Caco-2 (cell line): ENCODE measurements at regions of chr2 and their contacts with region 1.

Region 1: DNA sequence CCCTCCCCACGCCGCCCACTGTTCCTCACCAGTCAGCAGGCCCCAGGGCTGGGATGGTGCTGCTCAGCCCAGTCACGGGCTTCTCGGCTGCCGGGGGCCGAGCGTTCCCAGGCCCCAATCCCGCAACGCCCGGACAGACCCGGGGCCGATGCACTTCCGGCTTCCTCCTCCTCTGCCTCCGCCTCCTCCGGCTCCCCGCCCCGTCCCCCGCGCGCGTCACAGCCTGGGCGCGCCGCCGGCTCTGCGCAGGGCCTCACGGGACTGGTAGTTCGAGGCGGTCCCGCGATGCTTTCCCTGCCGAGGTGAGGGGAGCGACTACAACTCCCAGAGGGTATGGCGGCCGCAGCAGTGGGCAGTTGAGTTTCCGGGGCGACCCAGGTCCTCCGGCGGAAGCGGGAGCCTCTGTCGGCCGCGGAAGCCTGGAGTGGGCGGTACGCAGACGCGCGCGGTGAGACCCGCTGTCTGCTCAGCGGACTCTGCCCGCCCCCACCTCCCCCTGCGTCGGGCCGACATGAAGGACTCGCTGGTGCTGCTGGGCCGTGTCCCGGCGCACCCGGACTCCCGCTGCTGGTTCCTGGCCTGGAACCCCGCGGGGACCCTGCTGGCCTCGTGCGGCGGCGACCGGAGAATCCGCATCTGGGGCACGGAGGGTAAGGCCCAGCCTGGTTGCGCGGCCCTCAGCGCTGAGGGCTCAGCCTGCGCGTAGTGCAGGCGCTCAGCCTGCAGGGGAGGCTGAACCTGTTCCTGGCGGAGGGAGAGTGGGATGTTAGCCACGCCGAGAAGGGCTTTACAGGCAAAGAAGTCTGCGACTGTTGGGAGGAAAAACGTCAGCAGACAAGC is at the starts of genes CIAO1 and TMEM127:
- DNase-seq: peak; percentile 99
- H3K4me3 ChIP-seq: peak within 1 kb of the TSS; percentile 96
- H3K4me3 Mint-ChIP-seq: peak within 1 kb of the TSS; percentile 88
- H3K27ac Mint-ChIP-seq: peak within 1 kb of the TSS; percentile 67
- H3K4me1 ChIP-seq: peaks cover 29% of the 10 kb centered on the region
- H3K4me1 Mint-ChIP-seq: peaks cover 21% of the 10 kb centered on the region
- H3K27me3 ChIP-seq: no peaks in the 10 kb centered on the region
- H3K27me3 Mint-ChIP-seq: no peaks in the 10 kb centered on the region
- CTCF ChIP-seq: peak in 1 of 2 experiments; percentile 36
- total RNA-seq, gene CIAO1: 93.8 and 97.9 TPM in 2 replicates
- total RNA-seq, gene TMEM127: 43.3 and 49.1 TPM in 2 replicates

Region 2: DNA sequence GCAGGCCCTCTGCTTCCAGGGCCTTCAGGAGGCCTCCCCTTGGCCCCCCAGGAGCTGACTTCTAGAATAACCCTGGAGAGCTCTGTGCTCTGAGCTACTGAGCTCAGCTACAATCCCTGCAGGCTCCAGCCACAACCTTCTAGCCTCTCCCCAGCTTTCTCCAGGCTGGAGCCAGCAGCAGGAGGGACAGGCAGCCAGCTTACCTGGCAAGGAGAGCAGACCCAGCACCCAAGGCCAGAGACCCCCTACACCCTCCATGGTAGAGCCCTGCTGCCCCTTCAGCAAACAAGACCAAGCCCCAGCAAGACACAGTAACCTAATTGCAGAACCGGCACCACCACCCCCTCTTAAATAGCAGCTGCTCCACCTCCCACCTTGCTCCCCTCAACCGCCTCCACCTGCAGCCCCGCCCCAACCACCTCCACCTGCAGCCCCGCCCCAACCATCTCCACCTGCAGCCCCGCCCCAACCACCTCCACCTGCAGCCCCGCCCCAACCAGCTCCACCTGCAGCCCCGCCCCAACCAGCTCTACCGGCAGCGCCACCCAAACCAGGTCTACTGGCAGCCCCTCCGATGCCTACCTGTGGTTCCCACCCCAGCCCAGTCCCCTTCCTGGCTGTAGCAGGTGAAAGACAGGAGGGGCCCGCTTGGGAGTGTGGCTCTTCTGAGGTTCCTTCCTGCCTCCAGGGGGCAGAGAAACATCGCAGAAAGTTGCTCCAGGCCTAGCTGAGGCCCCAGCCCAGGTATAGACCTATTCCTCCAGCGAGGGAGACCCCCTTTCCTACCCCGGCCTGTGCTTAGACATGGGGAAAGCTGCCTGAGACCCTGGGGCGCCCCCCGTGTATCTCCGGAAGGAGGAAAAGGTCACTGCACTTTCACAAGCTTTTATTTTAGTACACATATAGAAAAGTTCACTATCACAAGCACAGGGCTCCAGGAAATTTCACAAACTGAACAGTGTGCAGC is 127.6 kb before region 1 on chr2 and contains the start of gene ASTL:
- CTCF ChIA-PET with region 1: interaction called, 15 read pairs
- POLR2A ChIA-PET with region 1: no interaction called
- intact Hi-C with region 1: loop called (anchors 1 kb)
- DNase-seq: peak; percentile 86 to 90
- H3K4me3 ChIP-seq: peak within 1 kb of the TSS; percentile 26
- H3K4me3 Mint-ChIP-seq: peak within 1 kb of the TSS; percentile 52
- H3K27ac Mint-ChIP-seq: no peak within 1 kb of the TSS
- H3K4me1 ChIP-seq: peaks cover 4% of the 10 kb centered on the region; the same call in 1 of the 2 replicates
- H3K4me1 Mint-ChIP-seq: peaks cover 6% of the 10 kb centered on the region
- H3K27me3 ChIP-seq: no peaks in the 10 kb centered on the region
- H3K27me3 Mint-ChIP-seq: peaks cover 8% of the 10 kb centered on the region
- CTCF ChIP-seq: peak; percentile 42 to 76
- total RNA-seq, gene ASTL: 0.23 TPM in 1 of 2 replicates, not detected in the other

Region 3: DNA sequence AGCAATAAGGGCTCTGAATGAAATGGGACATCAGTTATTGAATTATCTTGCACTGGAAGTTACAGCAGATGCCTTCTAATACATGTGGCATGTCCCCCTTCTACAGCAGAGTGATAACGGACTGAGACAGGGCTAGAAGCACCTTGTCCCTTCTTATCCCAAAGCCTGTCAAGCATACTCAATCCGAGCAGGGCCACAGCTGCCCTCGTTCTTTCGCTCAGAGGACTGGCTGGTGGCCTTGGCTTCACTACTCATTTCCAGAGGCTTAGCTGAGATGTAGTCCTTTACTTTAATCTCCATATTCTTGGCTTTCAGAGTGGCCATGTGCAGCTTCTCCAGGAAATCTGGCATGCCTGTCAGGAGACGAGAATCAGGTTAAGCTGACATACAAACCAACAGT is 79.5 kb before region 1 on chr2:
- CTCF ChIA-PET with region 1: no interaction called
- POLR2A ChIA-PET with region 1: no interaction called
- intact Hi-C with region 1: loop called (anchors 5 kb)
- DNase-seq: no peak
- H3K4me3 ChIP-seq: no peak overlapping the region
- H3K4me3 Mint-ChIP-seq: no peak overlapping the region
- H3K27ac Mint-ChIP-seq: peak overlapping the region; percentile 39
- H3K4me1 ChIP-seq: peaks cover 25% of the 10 kb centered on the region
- H3K4me1 Mint-ChIP-seq: peaks cover 20% of the 10 kb centered on the region
- H3K27me3 ChIP-seq: no peaks in the 10 kb centered on the region
- H3K27me3 Mint-ChIP-seq: no peaks in the 10 kb centered on the region
- CTCF ChIP-seq: no peak

Region 4: GRCh38 chr2:96218508-96219131 is 47.4 kb before region 1 on chr2:
- CTCF ChIA-PET with region 1: no interaction called
- POLR2A ChIA-PET with region 1: no interaction called
- intact Hi-C with region 1: no loop called
- DNase-seq: no peak
- H3K4me3 ChIP-seq: no peak overlapping the region
- H3K4me3 Mint-ChIP-seq: no peak overlapping the region
- H3K27ac Mint-ChIP-seq: no peak overlapping the region
- H3K4me1 ChIP-seq: no peaks in the 10 kb centered on the region
- H3K4me1 Mint-ChIP-seq: no peaks in the 10 kb centered on the region
- H3K27me3 ChIP-seq: no peaks in the 10 kb centered on the region
- H3K27me3 Mint-ChIP-seq: no peaks in the 10 kb centered on the region
- CTCF ChIP-seq: no peak

Region 5: DNA sequence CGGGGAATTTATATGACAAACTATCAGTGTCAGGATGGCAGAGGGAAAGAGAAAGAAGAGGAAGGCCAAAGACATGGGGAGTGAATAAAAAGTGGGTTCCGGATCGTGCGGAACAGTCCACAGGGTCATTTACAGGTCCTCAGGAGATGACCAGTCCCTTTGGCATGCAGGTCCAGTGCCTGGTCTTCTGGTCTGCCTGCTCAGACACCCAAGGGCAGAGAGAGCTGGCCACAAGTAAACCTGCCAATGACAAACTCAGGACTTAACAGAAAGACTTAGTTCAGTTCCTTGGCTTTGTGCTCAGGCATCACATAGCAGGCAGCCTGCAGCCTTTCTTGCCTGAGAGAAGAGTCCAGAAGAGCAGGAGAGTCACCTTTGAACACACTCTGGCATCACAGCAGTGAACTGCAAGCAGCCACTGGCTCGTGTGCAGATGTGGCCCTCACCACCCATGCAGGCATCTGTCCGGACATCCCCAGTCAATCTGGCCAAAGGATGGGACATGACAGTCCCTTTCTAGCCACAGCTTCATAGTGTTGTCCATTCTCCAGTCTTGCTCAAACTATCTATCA is 14.3 kb before region 1 on chr2:
- CTCF ChIA-PET with region 1: no interaction called
- POLR2A ChIA-PET with region 1: interaction called, 3 read pairs
- intact Hi-C with region 1: loop called (anchors 2 kb)
- DNase-seq: peak; percentile 65 to 83
- H3K4me3 ChIP-seq: no peak overlapping the region
- H3K4me3 Mint-ChIP-seq: no peak overlapping the region
- H3K27ac Mint-ChIP-seq: peak overlapping the region; percentile 10
- H3K4me1 ChIP-seq: no peaks in the 10 kb centered on the region; the same call in 1 of the 2 replicates
- H3K4me1 Mint-ChIP-seq: no peaks in the 10 kb centered on the region
- H3K27me3 ChIP-seq: no peaks in the 10 kb centered on the region
- H3K27me3 Mint-ChIP-seq: no peaks in the 10 kb centered on the region
- CTCF ChIP-seq: no peak

Region 6: DNA sequence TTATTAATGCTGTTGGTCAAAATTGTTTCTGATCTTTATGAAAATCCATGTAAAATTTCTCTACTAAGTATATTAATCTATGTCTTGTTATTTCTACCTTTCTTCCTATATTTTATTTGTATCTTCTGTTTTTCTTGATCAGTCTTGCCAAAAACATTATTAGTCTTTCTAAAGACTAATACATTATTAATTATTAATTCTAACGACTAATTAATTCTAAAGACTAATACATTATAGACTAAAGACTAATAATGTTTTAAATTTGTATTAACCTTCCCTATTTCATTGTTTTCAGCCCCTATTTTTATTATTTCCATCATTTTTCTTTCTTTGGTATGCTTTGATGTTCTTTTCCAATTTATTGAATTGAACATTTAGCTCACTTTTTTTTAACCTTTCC is 211.4 kb after region 1 on chr2:
- CTCF ChIA-PET with region 1: no interaction called
- POLR2A ChIA-PET with region 1: no interaction called
- intact Hi-C with region 1: no loop called
- DNase-seq: no peak
- H3K4me3 ChIP-seq: no peak overlapping the region
- H3K4me3 Mint-ChIP-seq: no peak overlapping the region
- H3K27ac Mint-ChIP-seq: no peak overlapping the region
- H3K4me1 ChIP-seq: no peaks in the 10 kb centered on the region
- H3K4me1 Mint-ChIP-seq: no peaks in the 10 kb centered on the region
- H3K27me3 ChIP-seq: no peaks in the 10 kb centered on the region
- H3K27me3 Mint-ChIP-seq: peaks cover 11% of the 10 kb centered on the region
- CTCF ChIP-seq: no peak

Region 7: DNA sequence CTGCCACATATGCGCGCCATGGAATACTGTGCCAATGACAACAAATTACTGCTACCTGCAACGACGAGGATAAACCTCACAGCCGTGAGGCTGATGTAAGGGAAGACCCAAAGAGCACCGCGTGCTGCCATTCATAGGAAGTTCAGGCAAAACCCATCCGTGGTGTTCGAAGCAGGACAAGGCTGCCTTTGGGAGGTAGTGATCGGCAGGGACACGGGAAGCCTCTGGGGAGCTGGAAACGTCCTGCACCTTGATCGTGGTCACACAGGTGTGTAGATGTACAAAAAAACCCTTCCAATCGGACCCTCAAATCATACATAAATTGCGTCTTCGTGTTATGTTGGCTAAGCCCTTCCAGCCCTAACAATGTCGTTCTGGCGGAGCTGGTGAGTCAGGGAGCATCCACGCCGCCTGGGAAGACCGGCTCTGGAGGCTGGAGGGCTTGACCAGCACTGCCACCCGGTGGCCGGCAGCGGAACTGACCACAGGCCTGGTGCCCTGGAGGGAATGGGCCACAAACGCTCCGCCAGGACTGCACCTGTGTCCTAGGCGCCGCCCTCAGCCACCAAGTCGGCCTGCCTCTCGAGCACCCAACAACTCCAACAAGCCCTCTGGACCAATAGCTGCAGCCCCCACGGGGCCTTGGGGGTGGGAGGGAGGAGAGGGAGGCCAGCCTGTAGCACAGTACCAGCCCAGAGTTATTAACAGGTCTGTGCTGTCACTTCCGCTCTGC is 243.2 kb after region 1 on chr2:
- CTCF ChIA-PET with region 1: no interaction called
- POLR2A ChIA-PET with region 1: no interaction called
- intact Hi-C with region 1: loop called (anchors 5 kb)
- DNase-seq: peak; percentile 88 to 94
- H3K4me3 ChIP-seq: no peak overlapping the region
- H3K4me3 Mint-ChIP-seq: peak overlapping the region; percentile 45
- H3K27ac Mint-ChIP-seq: peak overlapping the region; percentile 61
- H3K4me1 ChIP-seq: peaks cover 35% of the 10 kb centered on the region
- H3K4me1 Mint-ChIP-seq: peaks cover 21% of the 10 kb centered on the region
- H3K27me3 ChIP-seq: no peaks in the 10 kb centered on the region
- H3K27me3 Mint-ChIP-seq: peaks cover 3% of the 10 kb centered on the region
- CTCF ChIP-seq: peak; percentile 97 to 98

Region 8: GRCh38 chr2:96747136-96747535 is 481.1 kb after region 1 on chr2:
- CTCF ChIA-PET with region 1: no interaction called
- POLR2A ChIA-PET with region 1: no interaction called
- intact Hi-C with region 1: no loop called
- DNase-seq: no peak
- H3K4me3 ChIP-seq: no peak overlapping the region
- H3K4me3 Mint-ChIP-seq: no peak overlapping the region
- H3K27ac Mint-ChIP-seq: no peak overlapping the region
- H3K4me1 ChIP-seq: no peaks in the 10 kb centered on the region
- H3K4me1 Mint-ChIP-seq: peaks cover 7% of the 10 kb centered on the region
- H3K27me3 ChIP-seq: no peaks in the 10 kb centered on the region
- H3K27me3 Mint-ChIP-seq: no peaks in the 10 kb centered on the region
- CTCF ChIP-seq: no peak